ENCODE measurements at regions of chr20 and their contacts with region 1.

Region 1: GRCh38 chr20:53513301-53514298 is 80.0 kb downstream of the ZNF217 start:
- DNase-seq: peak; percentile 31
- ATAC-seq: no peak
- H3K4me3 ChIP-seq: no peak overlapping the region
- H3K27ac ChIP-seq: no peak overlapping the region
- H3K4me1 ChIP-seq: peaks cover 7% of the 10 kb centered on the region; the same call in 1 of the 2 replicates
- H3K27me3 ChIP-seq: no peaks in the 10 kb centered on the region
- CTCF ChIP-seq: no peak

Region 2: DNA sequence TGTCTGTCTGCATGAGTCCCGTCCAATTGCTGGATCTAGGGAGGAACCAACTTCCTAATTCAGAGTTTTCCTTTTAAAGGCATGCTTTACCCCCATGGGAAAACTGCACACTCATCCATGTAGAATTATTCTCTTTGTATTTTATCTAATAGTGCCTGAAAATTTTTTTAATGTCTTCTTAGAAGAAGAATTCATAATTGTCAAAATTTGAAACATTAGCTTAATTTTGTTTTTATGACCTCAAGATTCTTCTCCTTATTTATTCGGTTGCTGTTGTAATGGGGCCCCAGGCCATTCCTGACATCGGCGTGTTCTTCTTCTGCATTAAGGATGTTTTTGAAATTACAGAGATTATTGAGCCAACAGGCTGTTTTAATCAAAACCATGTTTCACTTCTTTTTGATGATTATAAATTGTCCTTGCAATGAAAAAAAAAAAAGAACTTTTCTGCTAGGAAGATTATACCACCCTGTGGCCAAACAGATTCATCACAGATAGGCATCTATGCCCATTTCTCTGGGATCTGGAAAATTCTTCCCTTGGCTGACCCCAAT is 20.2 kb before region 1 on chr20:
- CTCF ChIA-PET with region 1: no interaction called
- POLR2A ChIA-PET with region 1: no interaction called
- intact Hi-C with region 1: no loop called
- DNase-seq: no peak
- ATAC-seq: no peak
- H3K4me3 ChIP-seq: no peak overlapping the region
- H3K27ac ChIP-seq: no peak overlapping the region
- H3K4me1 ChIP-seq: no peaks in the 10 kb centered on the region
- H3K27me3 ChIP-seq: no peaks in the 10 kb centered on the region
- CTCF ChIP-seq: no peak; the same call in 1 of the 2 replicates

Region 3: GRCh38 chr20:53559816-53560215 is 46.2 kb after region 1 on chr20:
- CTCF ChIA-PET with region 1: no interaction called
- POLR2A ChIA-PET with region 1: interaction called, 16 read pairs
- intact Hi-C with region 1: no loop called
- DNase-seq: peak; percentile 38
- ATAC-seq: no peak
- H3K4me3 ChIP-seq: no peak overlapping the region
- H3K27ac ChIP-seq: no peak overlapping the region
- H3K4me1 ChIP-seq: no peaks in the 10 kb centered on the region
- H3K27me3 ChIP-seq: no peaks in the 10 kb centered on the region
- CTCF ChIP-seq: no peak

Measured in PC-3 (cell line).